ENCODE measurements at regions of chr22 and their contacts with region 1.

Region 1: GRCh38 chr22:19317865-19318264 is 26.3 kb upstream of the CLTCL1 start:
- DNase-seq: no peak
- H3K4me3 ChIP-seq: no peak overlapping the region
- H3K27ac ChIP-seq: no peak overlapping the region
- H3K4me1 ChIP-seq: no peaks in the 10 kb centered on the region
- H3K27me3 ChIP-seq: no peaks in the 10 kb centered on the region
- CTCF ChIP-seq: no peak

Region 2: DNA sequence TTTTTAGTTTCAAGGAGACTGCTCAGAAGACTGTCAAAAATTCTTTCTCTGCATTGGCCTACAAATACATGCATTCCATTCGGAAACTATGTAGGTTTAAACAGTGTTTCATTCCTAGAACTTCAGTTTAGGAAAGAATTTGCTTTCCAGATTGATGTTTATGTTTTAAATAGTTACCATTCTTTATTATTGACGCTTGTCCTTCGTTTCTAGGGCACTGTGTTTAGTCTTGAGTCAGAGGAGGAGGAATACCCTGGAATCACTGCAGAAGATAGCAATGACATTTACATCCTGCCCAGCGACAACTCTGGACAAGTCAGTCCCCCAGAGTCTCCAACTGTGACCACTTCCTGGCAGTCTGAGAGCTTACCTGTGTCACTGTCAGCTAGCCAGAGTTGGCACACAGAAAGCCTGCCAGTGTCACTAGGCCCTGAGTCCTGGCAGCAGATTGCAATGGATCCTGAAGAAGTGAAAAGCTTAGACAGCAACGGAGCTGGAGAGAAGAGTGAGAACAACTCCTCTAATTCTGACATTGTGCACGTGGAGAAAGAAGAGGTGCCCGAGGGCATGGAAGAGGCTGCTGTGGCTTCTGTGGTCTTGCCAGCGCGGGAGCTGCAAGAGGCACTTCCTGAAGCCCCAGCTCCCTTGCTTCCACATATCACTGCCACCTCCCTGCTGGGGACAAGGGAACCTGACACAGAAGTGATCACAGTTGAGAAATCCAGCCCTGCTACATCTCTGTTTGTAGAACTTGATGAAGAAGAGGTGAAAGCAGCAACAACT is 1591.2 kb before region 1 on chr22:
- intact Hi-C with region 1: loop called (anchors 10 kb)
- DNase-seq: no peak
- H3K4me3 ChIP-seq: no peak overlapping the region
- H3K27ac ChIP-seq: peak overlapping the region; percentile 17 to 67
- H3K4me1 ChIP-seq: peaks cover 0 to 43% (median 24%) of the 10 kb centered on the region in 4 donors
- H3K27me3 ChIP-seq: no peaks in the 10 kb centered on the region
- CTCF ChIP-seq: no peak

Region 3: GRCh38 chr22:19178656-19179496 is 139.0 kb before region 1 on chr22 and contains the start of gene SLC25A1:
- intact Hi-C with region 1: no loop called
- DNase-seq: peak; percentile 89 to 96
- H3K4me3 ChIP-seq: peak within 1 kb of the TSS; percentile 77 to 78
- H3K27ac ChIP-seq: peak within 1 kb of the TSS; percentile 86 to 89
- H3K4me1 ChIP-seq: peaks cover 6 to 52% (median 36%) of the 10 kb centered on the region in 4 donors
- H3K27me3 ChIP-seq: no peaks in the 10 kb centered on the region
- CTCF ChIP-seq: no peak

Region 4: GRCh38 chr22:19447388-19448075 is 129.7 kb after region 1 on chr22 and contains the start of gene C22orf39:
- intact Hi-C with region 1: no loop called
- DNase-seq: peak; percentile 91 to 94
- H3K4me3 ChIP-seq: peak within 1 kb of the TSS; percentile 81 to 88
- H3K27ac ChIP-seq: peak within 1 kb of the TSS; percentile 84 to 91
- H3K4me1 ChIP-seq: peaks cover 0 to 37% (median 17%) of the 10 kb centered on the region in 4 donors
- H3K27me3 ChIP-seq: no peaks in the 10 kb centered on the region
- CTCF ChIP-seq: no peak

Region 5: GRCh38 chr22:19705181-19705934 is 387.5 kb after region 1 on chr22:
- intact Hi-C with region 1: no loop called
- DNase-seq: peak; percentile 8 to 51
- H3K4me3 ChIP-seq: no peak overlapping the region
- H3K27ac ChIP-seq: no peak overlapping the region
- H3K4me1 ChIP-seq: peaks cover 0 to 2% (median 0%) of the 10 kb centered on the region in 4 donors
- H3K27me3 ChIP-seq: peaks cover 0 to 26% of the 10 kb centered on the region in 2 donors
- CTCF ChIP-seq: no peak